Dendritic cell treated with granulocyte-macrophage colony-stimulating factor and Interleukin-4, amounts not matched to agents 40 ng/mL and 50 ng/mL, for 4 days (primary cell): ENCODE measurements at regions of chr17 and their contacts with region 1.

Region 1: DNA sequence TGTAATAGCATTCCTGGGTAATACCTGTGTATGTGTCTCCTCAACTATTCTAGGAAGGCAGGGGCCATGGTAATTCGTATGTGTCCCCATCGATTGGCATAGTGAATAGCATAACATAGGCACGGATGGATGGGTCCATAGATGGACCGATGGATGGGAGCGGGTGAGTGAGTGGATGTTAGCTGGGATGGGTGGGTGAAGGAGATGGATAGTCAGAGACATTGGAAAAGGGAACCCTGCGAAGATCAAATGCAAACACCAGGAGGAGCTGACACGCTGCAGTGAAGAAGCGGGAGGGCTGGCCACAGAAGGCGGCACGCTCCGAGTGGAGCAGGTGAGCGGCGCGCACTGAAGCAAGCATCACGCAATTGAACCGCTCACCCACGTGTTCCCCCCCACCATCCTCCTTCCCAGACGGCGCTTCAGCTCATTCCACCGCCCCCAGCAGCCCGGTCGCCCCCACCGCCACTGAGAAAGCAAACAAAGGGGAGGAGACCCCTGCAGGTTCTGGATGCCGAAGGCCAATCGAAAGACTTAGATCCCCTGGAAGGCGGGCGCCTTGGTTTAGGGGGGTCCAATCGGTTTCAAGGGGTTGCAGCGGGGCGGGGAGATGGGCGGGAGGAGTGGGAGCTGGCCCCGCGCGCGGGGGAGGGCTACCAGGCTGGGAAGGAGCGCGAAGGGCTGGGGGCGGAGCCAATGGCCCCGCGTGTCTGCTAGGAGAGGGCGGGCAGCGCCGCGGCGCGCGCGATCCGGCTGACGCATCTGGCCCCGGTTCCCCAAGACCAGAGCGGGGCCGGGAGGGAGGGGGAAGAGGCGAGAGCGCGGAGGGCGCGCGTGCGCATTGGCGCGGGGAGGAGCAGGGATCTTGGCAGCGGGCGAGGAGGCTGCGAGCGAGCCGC is at the start of gene ARRB2:
- H3K4me3 Mint-ChIP-seq: peak within 1 kb of the TSS; percentile 86
- H3K27ac Mint-ChIP-seq: peak within 1 kb of the TSS; percentile 95
- H3K4me1 Mint-ChIP-seq: peaks cover 49% of the 10 kb centered on the region
- H3K27me3 Mint-ChIP-seq: no peaks in the 10 kb centered on the region

Region 2: GRCh38 chr17:4658478-4659305 is 51.4 kb before region 1 on chr17:
- intact Hi-C with region 1: no loop called
- H3K4me3 Mint-ChIP-seq: peak overlapping the region; percentile 61
- H3K27ac Mint-ChIP-seq: peak overlapping the region; percentile 91
- H3K4me1 Mint-ChIP-seq: peaks cover 65% of the 10 kb centered on the region
- H3K27me3 Mint-ChIP-seq: no peaks in the 10 kb centered on the region

Region 3: DNA sequence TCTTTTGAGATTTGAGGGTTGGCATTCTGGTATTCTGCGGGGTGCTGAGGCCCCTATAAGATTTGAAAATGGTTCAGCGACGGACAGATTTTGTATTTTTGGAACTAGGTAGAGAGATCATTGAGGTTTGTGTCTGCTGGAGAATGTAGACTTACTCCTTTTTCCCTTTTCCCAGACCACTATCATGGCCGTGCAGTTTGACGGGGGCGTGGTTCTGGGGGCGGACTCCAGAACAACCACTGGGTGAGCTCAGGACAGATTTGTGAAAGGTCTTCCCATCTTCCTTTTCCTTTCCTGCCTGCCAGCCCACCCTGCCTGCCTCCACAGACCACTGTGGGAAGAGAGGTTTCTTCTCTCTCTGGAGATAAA is 86.5 kb after region 1 on chr17:
- intact Hi-C with region 1: loop called (anchors 2 kb)
- H3K4me3 Mint-ChIP-seq: peak overlapping the region; percentile 100
- H3K27ac Mint-ChIP-seq: peak overlapping the region; percentile 95
- H3K4me1 Mint-ChIP-seq: peaks cover 12% of the 10 kb centered on the region
- H3K27me3 Mint-ChIP-seq: peaks cover 17% of the 10 kb centered on the region